ENCODE measurements at regions of chr4 and their contacts with region 1.

Region 1: GRCh38 chr4:69881173-69881773 is 21.3 kb upstream of the SULT1E1 start:
- DNase-seq: peak in 1 of 2 donors; percentile 19
- H3K4me3 ChIP-seq: no peak overlapping the region
- CTCF ChIP-seq: no peak
- POLR2A ChIP-seq: no peak

Region 2: DNA sequence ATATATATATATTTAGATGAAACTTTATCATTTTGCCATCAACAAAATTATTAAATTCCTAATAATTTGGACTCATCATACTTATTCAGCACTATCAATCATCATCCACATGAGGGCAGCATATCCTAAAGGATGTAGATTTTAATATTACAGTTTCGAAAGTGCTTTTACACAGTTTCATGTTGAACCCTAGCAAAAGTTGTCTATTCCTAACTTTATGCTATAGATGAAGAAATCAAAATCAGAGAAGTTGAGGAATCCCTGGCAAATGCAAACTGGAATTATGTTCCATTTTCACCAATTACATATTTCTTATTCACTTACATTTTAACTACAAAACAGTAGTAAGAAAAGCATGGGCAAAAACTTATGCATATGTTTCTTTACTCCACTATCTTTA is 191.7 kb before region 1 on chr4:
- intact Hi-C with region 1: loop called (anchors 5 kb)
- DNase-seq: no peak
- H3K4me3 ChIP-seq: no peak overlapping the region
- CTCF ChIP-seq: no peak
- POLR2A ChIP-seq: no peak

Measured in lower leg skin (tissue), 4 donors.